ENCODE measurements at regions of chr16 and their contacts with region 1.

Region 1: GRCh38 chr16:30534368-30535105 is at the start of gene ZNF747:
- DNase-seq: peak; percentile 94
- H3K4me3 Mint-ChIP-seq: peak within 1 kb of the TSS; percentile 86
- H3K27ac Mint-ChIP-seq: peak within 1 kb of the TSS; percentile 97
- H3K4me1 Mint-ChIP-seq: peaks cover 51% of the 10 kb centered on the region
- H3K27me3 Mint-ChIP-seq: no peaks in the 10 kb centered on the region

Region 2: DNA sequence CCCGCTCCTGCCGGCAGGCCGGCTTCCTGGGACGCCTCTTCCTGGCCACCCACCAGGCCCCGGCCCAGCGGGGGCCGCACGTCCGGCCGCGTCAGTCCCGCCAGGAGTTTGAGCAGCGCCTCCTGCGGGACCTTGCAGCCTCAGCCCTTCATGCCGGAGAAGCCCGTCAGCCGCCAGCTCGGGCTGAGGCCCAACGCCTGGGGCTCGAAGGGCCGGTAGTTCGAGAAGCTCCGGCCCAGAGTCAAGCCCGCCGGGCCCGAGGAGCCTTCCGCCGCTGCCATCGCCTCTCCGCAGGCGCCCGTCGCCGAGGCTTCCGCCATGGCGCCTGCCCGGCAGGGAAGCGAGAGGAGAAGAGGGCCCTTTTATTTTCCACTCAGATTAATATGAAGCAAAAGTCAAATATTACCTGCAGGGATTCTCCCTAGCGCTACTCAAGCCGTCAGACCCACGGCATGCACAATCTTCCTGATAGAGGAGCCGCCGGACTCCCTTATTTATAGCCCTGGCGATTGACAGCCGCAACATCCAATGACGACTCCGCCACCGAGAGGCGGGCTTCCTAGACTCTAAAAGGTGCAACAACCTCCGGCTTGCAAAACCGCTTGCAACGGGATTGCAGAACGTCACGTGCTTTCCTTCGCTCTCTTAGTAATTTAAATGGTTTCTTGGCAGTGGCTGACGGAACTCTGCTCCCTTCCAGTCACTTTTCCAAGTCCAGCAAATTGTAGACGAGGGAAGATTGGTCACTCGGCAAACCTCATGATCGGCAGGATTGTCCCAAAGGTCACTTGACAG is 88.9 kb before region 1 on chr16 and contains the start of gene SEPHS2:
- CTCF ChIA-PET with region 1: interaction called, 10 read pairs
- DNase-seq: peak; percentile 99
- H3K4me3 Mint-ChIP-seq: peak within 1 kb of the TSS; percentile 95
- H3K27ac Mint-ChIP-seq: peak within 1 kb of the TSS; percentile 97
- H3K4me1 Mint-ChIP-seq: peaks cover 56% of the 10 kb centered on the region
- H3K27me3 Mint-ChIP-seq: no peaks in the 10 kb centered on the region

Region 3: GRCh38 chr16:30519120-30520049 is 15.2 kb before region 1 on chr16:
- CTCF ChIA-PET with region 1: no interaction called
- DNase-seq: no peak
- H3K4me3 Mint-ChIP-seq: no peak overlapping the region
- H3K27ac Mint-ChIP-seq: peak overlapping the region; percentile 15
- H3K4me1 Mint-ChIP-seq: peaks cover 16% of the 10 kb centered on the region
- H3K27me3 Mint-ChIP-seq: no peaks in the 10 kb centered on the region

Region 4: DNA sequence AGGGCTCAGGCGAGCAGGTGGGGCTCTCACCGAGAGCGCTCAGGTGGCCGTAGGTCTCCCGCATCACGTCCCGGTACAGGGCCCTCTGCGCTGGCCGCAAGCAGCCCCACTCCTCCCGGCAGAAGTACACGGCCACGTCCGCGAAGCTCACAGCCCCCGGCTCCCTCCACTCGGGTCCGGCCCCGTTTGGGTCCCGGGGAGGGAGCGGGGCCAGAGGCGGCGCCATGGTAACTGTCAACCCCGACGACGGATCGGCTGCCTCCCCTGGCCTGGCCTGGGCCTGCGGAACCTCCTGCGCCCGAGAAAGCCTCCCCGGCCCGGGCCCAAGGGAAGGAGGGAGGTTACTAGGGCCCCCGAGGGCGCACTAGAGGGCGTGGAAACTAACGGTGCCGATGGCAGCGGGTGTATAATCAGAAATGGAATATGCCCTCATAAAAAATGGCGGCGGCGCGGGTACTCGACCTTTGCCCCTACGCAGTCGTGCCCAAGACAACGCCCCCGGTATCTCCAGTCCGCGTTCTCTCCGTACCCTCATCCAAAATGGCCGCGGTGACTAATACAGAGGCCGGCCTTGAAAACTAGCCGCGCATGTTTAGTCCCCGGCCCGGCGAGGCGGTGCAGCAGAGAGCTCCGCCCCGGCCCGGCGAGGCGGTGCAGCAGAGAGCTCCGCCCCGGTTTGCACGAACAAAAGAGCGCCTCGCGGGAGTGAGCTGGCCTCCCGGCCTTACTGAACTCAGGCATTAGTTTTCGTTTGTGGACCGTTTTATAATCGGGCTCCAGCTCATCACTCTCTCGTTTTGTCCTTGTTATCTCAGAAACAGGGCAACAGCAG is 23.6 kb after region 1 on chr16 and contains the start of gene ZNF764:
- CTCF ChIA-PET with region 1: interaction called, 42 read pairs
- DNase-seq: peak; percentile 98
- H3K4me3 Mint-ChIP-seq: peak within 1 kb of the TSS; percentile 85
- H3K27ac Mint-ChIP-seq: peak within 1 kb of the TSS; percentile 93
- H3K4me1 Mint-ChIP-seq: peaks cover 60% of the 10 kb centered on the region
- H3K27me3 Mint-ChIP-seq: peaks cover 8% of the 10 kb centered on the region

Region 5: GRCh38 chr16:30585400-30586189 is 51.1 kb after region 1 on chr16 and contains the start of gene ZNF785:
- CTCF ChIA-PET with region 1: interaction called, 12 read pairs
- DNase-seq: peak; percentile 97
- H3K4me3 Mint-ChIP-seq: peak within 1 kb of the TSS; percentile 82
- H3K27ac Mint-ChIP-seq: peak within 1 kb of the TSS; percentile 79
- H3K4me1 Mint-ChIP-seq: peaks cover 39% of the 10 kb centered on the region
- H3K27me3 Mint-ChIP-seq: no peaks in the 10 kb centered on the region

Region 6: GRCh38 chr16:30628627-30629540 is 94.3 kb after region 1 on chr16:
- CTCF ChIA-PET with region 1: interaction called, 11 read pairs
- DNase-seq: peak; percentile 92
- H3K4me3 Mint-ChIP-seq: no peak overlapping the region
- H3K27ac Mint-ChIP-seq: no peak overlapping the region
- H3K4me1 Mint-ChIP-seq: peaks cover 14% of the 10 kb centered on the region
- H3K27me3 Mint-ChIP-seq: peaks cover 17% of the 10 kb centered on the region